IMR-90 (cell line): ENCODE measurements at regions of chr20 and their contacts with region 1.

Region 1: DNA sequence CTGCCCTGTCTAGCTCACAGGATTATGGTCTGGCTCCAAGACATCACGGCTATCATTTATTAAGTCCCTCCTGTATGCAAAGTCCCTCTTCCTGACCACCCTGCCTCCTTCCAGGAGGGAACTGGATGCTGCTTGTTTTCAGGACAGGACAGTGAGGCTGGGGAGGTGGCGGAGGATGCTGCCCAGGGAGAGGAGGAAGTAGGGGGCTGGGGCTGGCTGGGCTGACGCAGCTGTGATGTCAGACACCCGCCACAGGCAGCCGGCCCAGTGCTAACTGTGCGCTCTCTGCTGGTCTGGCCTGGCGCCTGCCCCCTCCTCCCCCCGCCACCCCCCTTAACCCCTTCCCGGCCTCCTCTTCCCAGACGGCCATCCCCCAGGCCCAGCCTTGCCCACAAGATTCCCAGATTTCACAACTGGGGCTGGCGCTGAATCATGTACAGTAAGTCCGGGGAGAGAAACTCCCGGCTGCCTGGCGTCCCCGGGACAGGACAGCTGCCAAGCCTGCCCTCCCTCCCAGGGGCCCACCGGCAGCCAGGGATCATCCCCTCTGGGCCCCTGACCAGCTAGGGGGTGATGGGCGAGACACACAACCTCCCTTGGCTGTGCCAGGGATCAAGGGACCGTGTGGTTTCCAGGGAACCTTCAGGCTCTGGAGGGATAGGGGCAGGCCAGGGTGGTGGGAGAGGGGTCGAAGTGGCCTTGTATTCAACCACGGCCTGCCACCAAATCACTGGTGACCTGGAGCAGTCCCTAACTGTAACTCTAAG is 118.1 kb downstream of the CEBPB start:
- DNase-seq: peak; percentile 100
- ATAC-seq: peak; percentile 59
- H3K4me3 ChIP-seq: peak overlapping the region; percentile 5; the same call in 1 of the 2 replicates
- H3K27ac ChIP-seq: peak overlapping the region; percentile 98
- H3K4me1 ChIP-seq: peaks cover 61% of the 10 kb centered on the region
- H3K27me3 ChIP-seq: no peaks in the 10 kb centered on the region
- CTCF ChIP-seq: peak; percentile 26; the same call in 1 of the 2 replicates
- POLR2A ChIP-seq: peak; percentile 74; the same call in 1 of the 2 replicates
- RAD21 ChIP-seq: peak; percentile 40

Region 2: DNA sequence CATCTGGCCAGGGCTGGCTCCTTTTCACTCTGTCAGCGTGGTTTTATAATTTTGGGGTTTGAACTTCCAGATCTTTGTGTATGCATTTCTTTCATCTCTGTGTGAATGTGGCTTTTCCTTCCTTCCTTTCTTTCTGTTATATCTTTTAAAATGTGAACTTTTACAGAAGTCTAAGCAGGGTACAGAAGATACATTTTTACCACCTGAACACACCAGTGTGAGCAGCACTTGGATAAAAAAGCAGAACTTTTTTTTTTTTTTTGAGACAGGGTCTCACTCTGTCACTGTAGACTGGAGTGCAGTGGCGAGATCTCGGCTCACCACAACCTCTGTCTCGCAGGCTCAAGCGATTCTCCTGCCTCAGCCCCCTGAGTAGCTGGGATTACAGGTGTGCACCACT is 97.6 kb before region 1 on chr20:
- CTCF ChIA-PET with region 1: no interaction called
- POLR2A ChIA-PET with region 1: no interaction called
- dilution Hi-C with region 1: no loop called
- in situ Hi-C with region 1: no loop called
- intact Hi-C with region 1: no loop called
- DNase-seq: no peak
- ATAC-seq: no peak
- H3K4me3 ChIP-seq: no peak overlapping the region
- H3K27ac ChIP-seq: no peak overlapping the region
- H3K4me1 ChIP-seq: peaks cover 3% of the 10 kb centered on the region
- H3K27me3 ChIP-seq: no peaks in the 10 kb centered on the region
- CTCF ChIP-seq: no peak
- POLR2A ChIP-seq: no peak
- RAD21 ChIP-seq: no peak

Region 3: GRCh38 chr20:50224531-50225255 is 84.0 kb before region 1 on chr20:
- CTCF ChIA-PET with region 1: no interaction called
- POLR2A ChIA-PET with region 1: no interaction called
- dilution Hi-C with region 1: no loop called
- in situ Hi-C with region 1: no loop called
- intact Hi-C with region 1: no loop called
- DNase-seq: peak; percentile 97
- ATAC-seq: peak; percentile 80
- H3K4me3 ChIP-seq: no peak overlapping the region
- H3K27ac ChIP-seq: peak overlapping the region; percentile 65
- H3K4me1 ChIP-seq: peaks cover 23% of the 10 kb centered on the region
- H3K27me3 ChIP-seq: no peaks in the 10 kb centered on the region
- CTCF ChIP-seq: peak; percentile 44
- POLR2A ChIP-seq: 0 out of 2 replicates have a peak, but pooled peaks have one; percentile 31
- RAD21 ChIP-seq: peak; percentile 30; the same call in 1 of the 2 replicates

Region 4: DNA sequence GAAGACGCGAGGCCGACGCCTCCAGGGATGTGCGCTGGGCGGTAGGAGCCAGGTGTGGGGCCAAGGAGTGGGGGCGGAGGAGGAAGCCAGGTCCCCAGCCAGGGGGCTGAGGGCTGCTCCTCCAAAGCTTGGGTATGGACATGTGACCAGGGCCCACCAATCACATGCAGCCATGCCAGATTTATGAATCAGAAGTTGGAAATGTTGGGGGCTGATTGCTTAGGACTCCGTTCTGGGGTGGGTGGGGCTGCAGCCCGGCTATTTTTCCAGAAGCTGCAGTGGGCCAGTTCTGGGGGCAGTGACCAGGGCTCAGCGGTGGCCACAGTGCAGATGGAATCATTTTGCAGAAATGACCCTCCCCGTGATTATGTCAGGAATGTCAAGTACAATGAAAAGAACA is 22.1 kb before region 1 on chr20:
- CTCF ChIA-PET with region 1: interaction called, 5 read pairs
- POLR2A ChIA-PET with region 1: interaction called, 10 read pairs
- dilution Hi-C with region 1: no loop called
- in situ Hi-C with region 1: no loop called
- intact Hi-C with region 1: loop called (anchors 2 kb)
- DNase-seq: peak; percentile 88
- ATAC-seq: peak; percentile 67
- H3K4me3 ChIP-seq: no peak overlapping the region
- H3K27ac ChIP-seq: peak overlapping the region; percentile 96
- H3K4me1 ChIP-seq: peaks cover 41% of the 10 kb centered on the region
- H3K27me3 ChIP-seq: no peaks in the 10 kb centered on the region
- CTCF ChIP-seq: no peak
- POLR2A ChIP-seq: no peak
- RAD21 ChIP-seq: no peak

Region 5: GRCh38 chr20:50380641-50381040 is 71.9 kb after region 1 on chr20:
- CTCF ChIA-PET with region 1: no interaction called
- POLR2A ChIA-PET with region 1: no interaction called
- dilution Hi-C with region 1: no loop called
- in situ Hi-C with region 1: no loop called
- intact Hi-C with region 1: loop called (anchors 5 kb)
- DNase-seq: peak; percentile 65
- ATAC-seq: peak; percentile 60
- H3K4me3 ChIP-seq: no peak overlapping the region
- H3K27ac ChIP-seq: no peak overlapping the region
- H3K4me1 ChIP-seq: peaks cover 19% of the 10 kb centered on the region
- H3K27me3 ChIP-seq: no peaks in the 10 kb centered on the region
- CTCF ChIP-seq: peak; percentile 72
- POLR2A ChIP-seq: no peak
- RAD21 ChIP-seq: peak; percentile 73